B cell (primary cell): ENCODE measurements at regions of chr1 and their contacts with region 1.

Region 1: DNA sequence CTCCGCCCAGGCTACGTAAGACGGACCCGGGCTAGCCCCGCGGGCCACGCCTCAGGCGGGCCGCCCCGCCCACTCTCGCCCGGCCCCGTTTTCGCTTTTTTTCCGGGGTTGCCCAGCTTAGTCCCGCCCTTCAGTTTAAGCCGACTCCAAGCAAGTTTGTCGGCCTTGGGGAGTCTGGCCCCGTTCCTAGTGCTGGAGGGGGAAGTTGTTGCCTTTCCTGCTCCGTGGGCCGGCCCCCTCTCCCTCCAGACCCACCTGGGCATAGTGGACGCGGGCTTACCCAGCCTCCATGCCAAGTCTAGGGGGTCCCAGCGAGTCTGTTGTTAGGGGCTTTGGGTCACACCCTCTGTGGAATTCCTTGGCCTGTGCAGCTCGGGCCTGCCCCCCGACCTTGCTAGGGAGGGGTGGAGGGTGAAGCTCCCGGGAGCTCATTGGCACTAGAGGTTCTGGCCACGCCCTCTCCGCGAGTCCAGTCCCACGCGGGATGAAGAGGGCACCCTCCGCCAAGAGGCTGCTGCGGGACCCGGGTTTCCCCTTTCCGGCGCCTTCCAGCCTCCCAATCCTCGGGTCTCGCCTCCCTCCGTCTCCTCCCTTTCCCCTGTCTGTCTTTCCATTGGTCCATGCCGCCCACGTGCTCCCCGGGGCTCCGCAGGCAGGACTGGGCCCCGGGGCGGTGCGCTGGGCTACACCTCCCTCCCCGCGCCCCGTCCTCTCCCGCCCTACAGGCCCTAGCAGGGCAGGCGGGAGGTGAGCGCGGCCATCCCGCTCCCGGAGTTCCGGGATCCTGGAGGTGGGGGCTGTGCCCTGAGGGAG is 3.3 kb downstream of the RUSC1 start:
- DNase-seq: peak; percentile 89
- ATAC-seq: peak; percentile 74
- H3K4me3 ChIP-seq: peak overlapping the region; percentile 64 to 100 (median 97)
- H3K4me3 Mint-ChIP-seq: peak overlapping the region; percentile 92
- H3K27ac ChIP-seq: peak overlapping the region; percentile 81 to 85
- H3K27ac Mint-ChIP-seq: peak overlapping the region; percentile 87
- H3K4me1 ChIP-seq: peaks cover 17 to 35% of the 10 kb centered on the region in 2 donors
- H3K4me1 Mint-ChIP-seq: peaks cover 32% of the 10 kb centered on the region
- H3K27me3 ChIP-seq: no peaks in the 10 kb centered on the region
- H3K27me3 Mint-ChIP-seq: no peaks in the 10 kb centered on the region
- CTCF ChIP-seq: no peak

Region 2: GRCh38 chr1:155185351-155186066 is 138.5 kb before region 1 on chr1:
- CTCF ChIA-PET with region 1: no interaction called
- POLR2A ChIA-PET with region 1: no interaction called
- intact Hi-C with region 1: no loop called
- DNase-seq: peak; percentile 79
- ATAC-seq: peak; percentile 97
- H3K4me3 ChIP-seq: peak overlapping the region in 1 of 5 experiments; percentile 1
- H3K4me3 Mint-ChIP-seq: peak overlapping the region; percentile 23
- H3K27ac ChIP-seq: peak overlapping the region; percentile 38 to 41
- H3K27ac Mint-ChIP-seq: peak overlapping the region; percentile 86
- H3K4me1 ChIP-seq: peaks cover 18 to 31% of the 10 kb centered on the region in 2 donors
- H3K4me1 Mint-ChIP-seq: peaks cover 28% of the 10 kb centered on the region
- H3K27me3 ChIP-seq: no peaks in the 10 kb centered on the region
- H3K27me3 Mint-ChIP-seq: no peaks in the 10 kb centered on the region
- CTCF ChIP-seq: peak; percentile 24

Region 3: GRCh38 chr1:155261852-155262673 is 61.9 kb before region 1 on chr1 and contains the start of gene SCAMP3:
- CTCF ChIA-PET with region 1: interaction called, 22 read pairs
- POLR2A ChIA-PET with region 1: interaction called, 3 read pairs
- intact Hi-C with region 1: loop called (anchors 1 kb)
- DNase-seq: peak; percentile 93
- ATAC-seq: peak; percentile 95
- H3K4me3 ChIP-seq: peak within 1 kb of the TSS; percentile 62 to 96 (median 86)
- H3K4me3 Mint-ChIP-seq: peak within 1 kb of the TSS; percentile 89
- H3K27ac ChIP-seq: peak within 1 kb of the TSS; percentile 50 to 73
- H3K27ac Mint-ChIP-seq: peak within 1 kb of the TSS; percentile 91
- H3K4me1 ChIP-seq: peaks cover 14 to 25% of the 10 kb centered on the region in 2 donors
- H3K4me1 Mint-ChIP-seq: peaks cover 28% of the 10 kb centered on the region
- H3K27me3 ChIP-seq: no peaks in the 10 kb centered on the region
- H3K27me3 Mint-ChIP-seq: no peaks in the 10 kb centered on the region
- CTCF ChIP-seq: no peak
- total RNA-seq, gene SCAMP3: 69.6 and 79.8 TPM in 2 replicates

Region 4: GRCh38 chr1:155277070-155277895 is 46.7 kb before region 1 on chr1 and contains the start of gene HCN3:
- CTCF ChIA-PET with region 1: interaction called, 11 read pairs
- POLR2A ChIA-PET with region 1: interaction called, 6 read pairs
- intact Hi-C with region 1: loop called (anchors 1 kb)
- DNase-seq: peak; percentile 95
- ATAC-seq: peak; percentile 75
- H3K4me3 ChIP-seq: peak within 1 kb of the TSS; percentile 49 to 64 (median 59)
- H3K4me3 Mint-ChIP-seq: peak within 1 kb of the TSS; percentile 83
- H3K27ac ChIP-seq: peak within 1 kb of the TSS in 1 of 2 donors; percentile 33
- H3K27ac Mint-ChIP-seq: peak within 1 kb of the TSS; percentile 41
- H3K4me1 ChIP-seq: peaks cover 25 to 36% of the 10 kb centered on the region in 2 donors
- H3K4me1 Mint-ChIP-seq: peaks cover 35% of the 10 kb centered on the region
- H3K27me3 ChIP-seq: no peaks in the 10 kb centered on the region
- H3K27me3 Mint-ChIP-seq: no peaks in the 10 kb centered on the region
- CTCF ChIP-seq: peak; percentile 76
- total RNA-seq, gene HCN3: 9.0 and 9.2 TPM in 2 replicates

Region 5: GRCh38 chr1:155479205-155479604 is 155.2 kb after region 1 on chr1:
- CTCF ChIA-PET with region 1: no interaction called
- POLR2A ChIA-PET with region 1: no interaction called
- intact Hi-C with region 1: no loop called
- DNase-seq: no peak
- ATAC-seq: peak; percentile 31
- H3K4me3 ChIP-seq: no peak overlapping the region
- H3K4me3 Mint-ChIP-seq: no peak overlapping the region
- H3K27ac ChIP-seq: no peak overlapping the region
- H3K27ac Mint-ChIP-seq: no peak overlapping the region
- H3K4me1 ChIP-seq: no peaks in the 10 kb centered on the region
- H3K4me1 Mint-ChIP-seq: peaks cover 19% of the 10 kb centered on the region
- H3K27me3 ChIP-seq: no peaks in the 10 kb centered on the region
- H3K27me3 Mint-ChIP-seq: no peaks in the 10 kb centered on the region
- CTCF ChIP-seq: no peak

Region 6: GRCh38 chr1:155562581-155563376 is 238.8 kb after region 1 on chr1 and contains the start of gene ASH1L:
- CTCF ChIA-PET with region 1: no interaction called
- POLR2A ChIA-PET with region 1: no interaction called
- intact Hi-C with region 1: loop called (anchors 2 kb)
- DNase-seq: peak; percentile 98
- ATAC-seq: peak; percentile 76
- H3K4me3 ChIP-seq: peak within 1 kb of the TSS; percentile 83 to 96 (median 92)
- H3K4me3 Mint-ChIP-seq: peak within 1 kb of the TSS; percentile 99
- H3K27ac ChIP-seq: peak within 1 kb of the TSS; percentile 96 to 97
- H3K27ac Mint-ChIP-seq: peak within 1 kb of the TSS; percentile 98
- H3K4me1 ChIP-seq: peaks cover 19 to 27% of the 10 kb centered on the region in 2 donors
- H3K4me1 Mint-ChIP-seq: peaks cover 45% of the 10 kb centered on the region
- H3K27me3 ChIP-seq: no peaks in the 10 kb centered on the region
- H3K27me3 Mint-ChIP-seq: no peaks in the 10 kb centered on the region
- CTCF ChIP-seq: no peak
- total RNA-seq, gene ASH1L: 124 and 128 TPM in 2 replicates